Activated T-helper 1 cell treated with anti-CD3 and anti-CD28 coated beads, Interleukin-12 subunit alpha, Interleukin-12 subunit beta, Interleukin-2, Interleukin-4 antibody, amounts not matched to agents 30 ng/mL and 10 ng/mL and 1 ng/mL, durations not matched to agents 14 hours and 24 hours and 36 hours (primary cell): ENCODE measurements at regions of chr19 and their contacts with region 1.

Region 1: DNA sequence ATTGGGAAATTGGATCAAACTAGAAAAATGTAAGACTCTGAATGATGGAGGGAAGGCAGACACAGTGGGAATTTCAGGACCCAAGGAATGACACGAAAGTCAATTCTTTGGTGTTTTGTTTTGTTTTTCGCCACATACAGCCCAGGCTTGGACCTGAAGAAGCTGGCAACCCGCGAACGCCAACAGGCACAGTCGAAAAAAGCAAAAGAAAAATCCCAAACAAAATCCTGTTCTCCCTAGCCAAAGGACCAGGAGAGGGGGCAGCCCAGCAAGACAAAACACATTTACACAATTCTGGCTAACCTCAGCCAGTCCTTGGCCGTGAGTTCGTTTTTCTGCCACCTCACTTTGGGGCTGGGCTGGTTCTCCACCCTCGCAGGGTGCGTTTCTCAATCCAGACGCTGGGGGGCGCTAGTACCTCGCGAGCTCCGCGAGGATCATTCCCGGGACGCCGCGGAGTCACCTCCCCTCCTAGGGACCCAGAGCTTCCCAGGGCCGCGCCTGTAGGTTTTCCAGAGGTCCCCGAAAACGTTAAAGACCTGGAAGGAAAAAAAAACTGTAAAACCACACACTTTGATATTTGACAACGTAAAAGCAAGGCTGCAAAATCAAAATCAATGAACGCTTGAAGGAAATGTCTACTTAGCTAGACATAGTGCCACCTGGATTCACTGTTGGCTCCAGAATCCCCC is 34.9 kb upstream of the TPM4 start:
- DNase-seq: peak; percentile 64
- H3K4me3 Mint-ChIP-seq: peak overlapping the region; percentile 45
- H3K27ac Mint-ChIP-seq: no peak overlapping the region
- H3K4me1 Mint-ChIP-seq: peaks cover 5% of the 10 kb centered on the region
- H3K27me3 Mint-ChIP-seq: peaks cover 4% of the 10 kb centered on the region

Region 2: DNA sequence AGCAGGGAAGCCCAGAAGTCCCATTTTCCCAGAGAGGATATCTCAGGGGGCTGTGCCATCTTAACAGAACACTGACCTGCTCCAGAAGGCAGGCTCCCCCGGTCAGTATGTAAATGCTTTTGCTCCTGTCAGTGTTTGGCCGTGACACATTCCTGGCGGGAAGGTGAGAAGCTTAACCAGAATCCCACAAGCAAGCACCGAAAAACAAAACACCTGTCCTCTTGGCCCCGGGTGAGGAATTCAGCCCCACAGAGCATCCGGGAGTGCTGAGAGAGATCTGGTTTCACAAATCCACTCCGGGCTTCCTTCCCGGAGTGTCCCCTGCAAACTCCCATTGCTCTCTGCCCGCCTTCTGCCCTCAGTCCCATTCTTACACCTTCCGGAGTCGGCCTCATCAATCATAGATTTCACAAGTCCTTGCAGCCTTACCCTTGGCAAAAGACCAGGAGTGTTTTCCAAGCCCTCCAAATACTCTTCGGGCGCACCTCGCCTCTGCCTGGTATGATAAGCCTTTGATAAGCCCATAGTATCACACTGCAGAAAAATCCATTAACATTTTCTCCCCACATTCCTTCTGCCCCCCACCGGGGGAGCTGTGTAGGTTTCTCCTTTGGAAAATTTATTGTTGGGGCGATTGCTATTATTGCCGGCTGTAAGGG is 47.0 kb after region 1 on chr19:
- intact Hi-C with region 1: loop called (anchors 2 kb)
- DNase-seq: no peak
- H3K4me3 Mint-ChIP-seq: no peak overlapping the region
- H3K27ac Mint-ChIP-seq: no peak overlapping the region
- H3K4me1 Mint-ChIP-seq: peaks cover 62% of the 10 kb centered on the region
- H3K27me3 Mint-ChIP-seq: no peaks in the 10 kb centered on the region

Region 3: GRCh38 chr19:16382775-16383543 is 341.5 kb after region 1 on chr19:
- intact Hi-C with region 1: loop called (anchors 1 kb)
- DNase-seq: peak; percentile 64
- H3K4me3 Mint-ChIP-seq: peak overlapping the region; percentile 62
- H3K27ac Mint-ChIP-seq: no peak overlapping the region
- H3K4me1 Mint-ChIP-seq: peaks cover 40% of the 10 kb centered on the region
- H3K27me3 Mint-ChIP-seq: no peaks in the 10 kb centered on the region